GM10248 (cell line): ENCODE measurements at regions of chr7 and their contacts with region 1.

Region 1: GRCh38 chr7:101126651-101127280 is at the start of gene SERPINE1:
- DNase-seq: peak; percentile 84
- CTCF ChIP-seq: no peak

Region 2: GRCh38 chr7:101066141-101066832 is 60.5 kb before region 1 on chr7:
- CTCF ChIA-PET with region 1: no interaction called
- POLR2A ChIA-PET with region 1: no interaction called
- DNase-seq: no peak
- CTCF ChIP-seq: no peak

Region 3: GRCh38 chr7:101108330-101108857 is 18.4 kb before region 1 on chr7:
- CTCF ChIA-PET with region 1: interaction called, 24 read pairs
- POLR2A ChIA-PET with region 1: interaction called, 6 read pairs
- DNase-seq: peak; percentile 73
- CTCF ChIP-seq: no peak